Cardiac septum (tissue), 1 donor: ENCODE measurements at regions of chr5 and their contacts with region 1.

Region 1: DNA sequence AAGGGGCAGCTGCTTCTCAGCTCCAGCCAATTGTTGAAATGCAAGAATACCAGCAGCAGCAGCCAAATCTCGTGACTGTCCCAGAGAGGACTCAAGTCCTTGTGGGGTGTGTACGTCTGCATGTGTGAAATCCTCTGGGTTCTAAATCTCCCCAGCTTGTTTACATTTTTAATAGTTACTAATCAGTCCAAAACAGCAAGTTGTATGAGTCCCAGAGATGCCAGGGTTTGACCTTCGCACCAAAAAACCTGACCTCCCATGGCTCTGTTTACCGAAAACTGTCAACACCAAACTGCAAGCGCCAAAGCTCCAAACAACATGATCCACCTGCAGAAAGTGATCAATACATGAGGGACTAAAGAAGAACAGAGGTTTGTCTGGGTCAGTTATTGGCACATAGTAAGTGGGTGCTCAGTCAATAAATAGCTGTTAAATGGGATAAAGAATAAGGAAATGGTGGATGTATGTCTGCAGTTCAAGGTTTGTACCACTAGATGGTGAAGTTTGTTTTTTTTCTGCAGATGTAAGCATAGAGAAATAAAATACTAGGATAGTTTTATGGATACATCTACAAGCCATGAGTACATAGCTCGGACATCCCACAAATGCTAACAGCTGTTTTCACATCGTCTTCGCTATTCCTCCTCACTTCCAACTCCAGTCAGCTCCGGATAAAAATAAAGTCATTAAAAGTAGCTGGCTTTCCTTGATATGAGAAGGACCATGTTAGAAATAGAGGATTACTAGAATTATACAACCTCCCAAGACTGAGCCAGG is 85.3 kb upstream of the ADRB2 start:
- DNase-seq: no peak

Region 2: DNA sequence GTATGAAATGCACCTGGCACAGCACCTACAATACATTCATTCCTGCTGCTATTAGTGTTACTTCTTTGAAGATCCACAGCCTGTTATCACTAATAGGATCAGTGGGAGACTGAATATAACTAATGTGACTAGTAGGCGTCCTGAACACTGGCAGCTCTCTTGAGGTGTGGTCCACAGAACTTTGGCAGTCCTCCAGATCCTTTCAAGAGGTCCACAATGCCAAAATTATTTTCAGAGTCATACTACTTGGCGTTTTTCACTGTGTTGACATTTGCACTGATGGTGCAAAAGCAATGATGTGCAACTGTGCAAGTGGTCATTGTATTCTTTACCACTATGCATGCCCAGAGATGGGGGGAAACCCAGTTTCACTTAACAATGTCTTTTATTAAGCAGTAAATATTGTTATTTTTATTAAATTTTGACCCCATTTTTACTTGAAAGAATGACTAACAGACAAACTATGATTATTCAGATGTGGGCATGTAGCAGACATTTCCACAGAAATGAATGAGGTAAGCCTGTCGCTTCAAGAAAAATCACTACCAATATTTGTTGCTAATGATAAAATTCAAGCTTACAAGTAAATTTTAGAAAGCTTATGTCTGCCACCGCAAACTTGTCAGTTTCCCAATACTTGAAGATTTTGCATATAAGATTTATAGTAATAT is 134.2 kb after region 1 on chr5:
- intact Hi-C with region 1: loop called (anchors 10 kb)
- DNase-seq: no peak

Region 3: GRCh38 chr5:148957591-148958202 is 216.5 kb after region 1 on chr5:
- intact Hi-C with region 1: loop called (anchors 5 kb)
- DNase-seq: no peak

Region 4: GRCh38 chr5:148998174-148998797 is 257.1 kb after region 1 on chr5:
- intact Hi-C with region 1: loop called (anchors 2 kb)
- DNase-seq: no peak

Region 5: GRCh38 chr5:149114403-149115312 is 373.5 kb after region 1 on chr5:
- intact Hi-C with region 1: loop called (anchors 2 kb)
- DNase-seq: no peak